GM13976 (cell line): ENCODE measurements at regions of chr11 and their contacts with region 1.

Region 1: DNA sequence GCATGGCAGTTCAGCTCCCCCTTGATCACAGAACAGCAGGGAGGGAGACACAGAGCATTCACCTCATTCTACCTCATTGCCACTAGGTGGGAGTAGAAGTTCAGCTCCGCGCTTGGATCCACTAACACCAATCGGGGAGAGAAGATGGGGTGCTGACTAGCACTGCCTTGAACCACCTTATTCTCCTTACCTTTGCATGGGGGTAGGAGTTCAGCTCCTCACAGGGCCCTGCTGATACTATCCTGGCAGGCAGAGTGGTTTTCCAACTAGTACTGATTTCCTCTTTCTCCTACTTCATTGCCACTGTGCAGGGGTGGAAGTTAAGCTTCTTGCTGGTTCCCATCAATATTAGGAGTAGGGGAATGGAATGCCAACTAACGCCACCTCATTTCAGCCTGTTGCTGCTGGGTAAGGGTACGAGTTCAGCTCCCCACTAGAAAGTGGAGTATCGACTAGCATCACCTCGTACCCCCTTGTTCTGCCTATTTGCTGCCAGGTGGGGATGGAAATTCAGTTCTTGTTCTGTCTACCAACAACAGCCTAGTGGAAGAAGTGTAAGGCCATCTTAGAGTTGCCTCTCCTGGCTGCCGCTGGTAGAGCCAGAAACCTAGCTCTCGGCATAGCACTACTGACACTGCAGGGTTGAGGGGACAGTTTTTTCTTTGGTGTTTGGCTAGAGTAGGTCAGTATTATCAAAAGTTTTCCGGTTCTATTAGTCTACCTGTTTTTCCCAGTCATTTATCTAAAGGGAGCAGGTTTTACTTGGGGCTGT is 550.9 kb upstream of the CCDC90B start:
- DNase-seq: peak; percentile 52
- CTCF ChIP-seq: peak; percentile 85

Region 2: DNA sequence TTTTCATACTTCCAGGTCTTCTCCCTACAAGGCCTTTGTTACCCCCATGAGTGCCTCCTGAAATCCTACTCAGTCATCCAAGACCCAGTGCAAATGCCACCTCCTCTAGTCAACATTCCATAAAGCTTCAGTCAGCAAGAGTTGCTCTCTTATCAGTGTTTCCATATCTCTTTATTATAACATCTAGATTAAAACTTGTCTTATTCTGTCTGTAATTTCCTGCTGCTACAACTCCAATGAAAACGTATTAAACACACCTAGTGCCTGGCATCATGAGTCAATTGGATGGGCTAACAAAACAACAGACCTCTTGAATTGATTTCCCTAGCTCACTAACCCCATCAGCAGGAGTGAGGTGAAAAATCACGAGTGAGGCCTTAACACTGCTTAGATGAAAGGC is 180.1 kb before region 1 on chr11:
- in situ Hi-C with region 1: no loop called
- DNase-seq: no peak
- CTCF ChIP-seq: no peak

Region 3: GRCh38 chr11:84261707-84262106 is 424.6 kb after region 1 on chr11:
- in situ Hi-C with region 1: loop called (anchors 25 kb)
- DNase-seq: no peak
- CTCF ChIP-seq: peak; percentile 37

Region 4: GRCh38 chr11:84384731-84385130 is 547.7 kb after region 1 on chr11:
- in situ Hi-C with region 1: loop called (anchors 25 kb)
- DNase-seq: peak; percentile 19
- CTCF ChIP-seq: peak; percentile 75

Region 5: DNA sequence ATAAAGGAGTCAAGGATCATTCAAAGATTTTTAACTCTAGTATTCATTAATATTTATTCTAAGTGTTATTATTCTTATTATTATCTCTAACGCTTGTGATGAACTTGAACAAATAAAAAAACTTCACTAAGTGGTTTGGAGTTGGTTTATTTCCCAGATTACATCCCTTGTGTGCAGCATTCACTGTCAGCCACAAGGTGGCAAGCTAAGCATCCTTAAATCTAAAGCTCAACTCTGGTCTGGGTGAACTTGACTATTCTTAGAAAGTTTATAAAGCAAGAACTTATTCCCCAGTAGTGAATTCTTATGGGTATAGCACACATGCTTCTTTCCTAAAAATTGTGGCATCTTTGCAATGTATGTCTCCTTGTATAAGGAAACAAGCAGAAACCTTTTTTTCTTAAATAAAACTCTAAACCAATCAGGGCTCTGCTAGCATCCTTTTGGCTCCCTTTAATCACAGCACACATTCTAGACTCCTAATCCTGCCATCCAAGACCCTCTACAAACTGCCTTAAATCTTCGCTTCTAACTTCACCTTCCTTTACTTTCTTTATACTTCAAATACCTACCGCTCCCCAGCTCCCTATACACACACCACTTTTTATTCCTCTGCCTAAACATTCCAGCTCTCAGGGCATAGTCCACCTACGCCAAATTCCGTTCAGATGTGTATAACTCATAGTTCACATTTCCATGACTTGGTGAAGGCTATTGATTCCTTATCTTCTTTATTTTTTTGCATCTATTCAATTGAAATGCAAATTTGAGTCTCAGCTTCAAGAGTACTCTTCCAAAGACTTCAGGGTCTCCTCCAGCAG is 721.2 kb after region 1 on chr11:
- in situ Hi-C with region 1: loop called (anchors 25 kb)
- DNase-seq: peak; percentile 27
- CTCF ChIP-seq: peak; percentile 63